Activated CD4-positive, alpha-beta memory T cell treated with anti-CD3 and anti-CD28 coated beads for 36 hours (primary cell): ENCODE measurements at regions of chr7 and their contacts with region 1.

Region 1: DNA sequence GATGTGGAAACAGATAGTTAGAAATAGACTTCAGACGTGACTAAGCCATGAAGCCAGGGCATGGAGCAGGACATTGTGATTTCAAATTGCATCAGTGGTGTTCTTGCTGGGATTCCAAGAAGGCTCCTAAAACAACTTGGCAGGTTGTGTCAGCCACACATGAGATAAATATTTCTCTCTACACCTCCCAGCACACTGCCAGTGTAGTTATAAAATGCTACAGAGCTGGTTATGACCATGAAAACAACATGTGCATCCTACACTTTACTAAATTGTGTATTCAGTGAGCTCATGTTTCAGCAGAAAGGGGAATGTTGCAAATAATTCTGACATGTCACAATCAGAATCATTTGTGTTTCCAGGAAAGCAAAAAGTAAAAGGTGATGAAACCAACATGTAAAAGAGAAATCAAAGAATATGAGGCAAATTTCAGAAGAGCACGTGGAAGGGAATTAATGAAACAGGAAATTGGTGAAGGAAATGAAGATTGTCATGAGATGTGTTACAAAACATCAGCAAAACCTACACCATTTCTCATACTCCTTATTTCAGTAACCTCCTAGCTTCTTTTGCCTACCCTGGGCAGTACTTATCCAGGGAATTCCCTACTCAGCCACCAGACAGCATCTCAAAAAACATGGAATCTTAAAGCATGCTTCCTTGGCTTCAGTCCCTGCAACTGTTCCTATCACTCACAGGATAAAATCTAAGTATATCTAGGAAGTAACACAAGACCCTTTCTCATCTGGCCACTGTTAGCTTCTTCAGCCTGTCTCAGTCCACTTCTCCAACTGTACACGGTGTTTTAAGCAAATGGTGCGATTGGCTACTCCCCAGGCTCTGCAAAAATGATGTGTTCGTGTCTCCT is 5.8 kb upstream of the CYP3A7 start:
- DNase-seq: no peak
- H3K4me3 Mint-ChIP-seq: no peak overlapping the region
- H3K27ac Mint-ChIP-seq: peak overlapping the region; percentile 59
- H3K4me1 Mint-ChIP-seq: peaks cover 9% of the 10 kb centered on the region
- H3K27me3 Mint-ChIP-seq: peaks cover 9% of the 10 kb centered on the region

Region 2: GRCh38 chr7:99631295-99632109 is 109.3 kb before region 1 on chr7:
- CTCF ChIA-PET with region 1: no interaction called
- POLR2A ChIA-PET with region 1: no interaction called
- intact Hi-C with region 1: loop called (anchors 10 kb)
- DNase-seq: peak; percentile 60
- H3K4me3 Mint-ChIP-seq: no peak overlapping the region
- H3K27ac Mint-ChIP-seq: peak overlapping the region; percentile 72
- H3K4me1 Mint-ChIP-seq: peaks cover 22% of the 10 kb centered on the region
- H3K27me3 Mint-ChIP-seq: no peaks in the 10 kb centered on the region

Region 3: DNA sequence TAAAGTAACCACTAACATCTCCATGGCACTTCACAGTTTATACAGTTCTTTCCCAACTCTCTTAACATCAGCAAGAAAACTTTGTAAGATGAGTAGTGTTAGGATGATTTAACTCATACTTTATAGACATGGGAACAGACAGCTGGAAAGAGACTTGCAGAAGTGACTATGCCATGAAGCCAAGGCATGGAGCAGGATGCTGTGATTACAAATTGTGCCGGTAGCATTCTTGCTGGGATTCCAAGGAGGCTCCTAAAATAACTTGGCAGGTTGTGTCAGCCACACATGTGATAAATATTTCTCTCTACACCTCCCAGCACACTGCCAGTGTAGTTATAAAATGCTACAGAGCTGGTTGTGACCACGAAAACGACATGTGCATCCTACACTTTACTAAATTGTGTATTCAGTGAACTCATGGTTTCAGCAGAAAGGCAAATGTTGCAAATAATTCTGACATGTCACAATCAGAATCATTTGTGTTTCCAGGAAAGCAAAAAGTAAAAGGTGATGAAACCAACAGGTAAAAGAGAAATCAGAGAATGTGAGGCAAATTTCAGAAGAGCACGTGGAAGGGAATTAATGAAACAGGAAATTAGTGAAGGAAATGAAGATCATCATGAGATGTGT is 48.7 kb after region 1 on chr7:
- CTCF ChIA-PET with region 1: no interaction called
- POLR2A ChIA-PET with region 1: no interaction called
- intact Hi-C with region 1: loop called (anchors 1 kb)
- DNase-seq: no peak
- H3K4me3 Mint-ChIP-seq: no peak overlapping the region
- H3K27ac Mint-ChIP-seq: peak overlapping the region; percentile 55
- H3K4me1 Mint-ChIP-seq: peaks cover 24% of the 10 kb centered on the region
- H3K27me3 Mint-ChIP-seq: peaks cover 3% of the 10 kb centered on the region